ENCODE measurements at regions of chr9 and their contacts with region 1.

Region 1: GRCh38 chr9:75855509-75855908 is 35.0 kb upstream of the PCSK5 start:
- DNase-seq: no peak
- ATAC-seq: peak; percentile 59

Region 2: DNA sequence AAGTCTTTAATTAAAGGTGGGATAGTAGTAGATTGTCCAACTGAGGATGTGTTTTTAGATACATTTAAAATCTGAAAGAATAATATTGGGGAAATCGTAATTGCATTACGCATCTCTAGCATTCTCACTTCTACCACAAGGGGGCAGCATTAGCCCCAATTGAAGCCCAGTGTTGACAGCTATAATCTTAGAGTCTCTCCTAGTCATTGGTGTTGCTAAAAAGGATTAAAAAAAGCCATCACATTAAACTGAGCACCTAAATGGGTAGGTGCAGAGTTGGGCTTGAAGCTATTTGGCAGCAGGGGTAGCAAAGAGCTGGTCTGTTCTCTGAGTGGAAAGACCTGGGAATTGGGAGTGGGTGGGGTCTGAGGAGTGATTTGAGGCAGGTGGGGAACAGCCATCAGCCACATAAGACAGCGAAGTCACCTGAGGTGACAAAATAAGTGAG is 590.0 kb before region 1 on chr9:
- intact Hi-C with region 1: loop called (anchors 5 kb)
- DNase-seq: no peak
- ATAC-seq: peak; percentile 72

Region 3: DNA sequence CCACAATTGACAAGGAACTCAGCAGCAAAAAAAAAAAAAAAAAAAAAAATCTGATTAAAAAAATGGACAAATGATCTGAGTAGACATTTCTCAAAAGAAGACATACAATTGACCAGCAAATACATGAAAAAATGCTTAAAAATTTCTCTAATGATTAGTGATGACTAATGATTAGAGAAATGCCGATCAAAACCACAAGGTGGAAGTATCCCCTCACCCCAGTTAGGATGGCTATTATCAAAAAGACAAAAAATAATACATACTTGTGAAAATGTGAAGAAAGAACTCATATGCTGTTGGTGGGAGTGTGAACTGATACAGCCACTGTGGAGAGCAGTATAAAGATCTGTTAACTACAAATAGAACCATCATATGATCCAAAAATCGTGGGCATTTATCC is 521.9 kb before region 1 on chr9:
- intact Hi-C with region 1: loop called (anchors 10 kb)
- DNase-seq: no peak
- ATAC-seq: peak; percentile 36

Region 4: DNA sequence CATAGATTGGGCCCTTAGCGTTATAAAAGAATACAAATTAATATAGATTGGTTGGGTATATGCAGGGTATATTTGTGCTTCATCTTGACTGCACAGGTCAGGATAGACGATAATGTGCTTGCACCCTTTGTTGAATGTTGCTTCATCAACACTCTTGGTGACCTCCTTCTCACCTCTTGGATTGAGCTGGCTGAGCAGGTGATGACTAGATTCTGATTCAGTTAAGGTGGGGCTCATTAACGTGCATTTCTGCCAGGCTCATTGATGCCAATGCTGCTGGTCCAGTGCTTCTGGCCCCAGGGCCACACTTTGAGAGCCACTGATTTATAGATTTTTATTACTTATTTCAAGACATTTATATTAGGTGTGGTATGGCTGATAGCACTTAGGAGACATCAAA is 62.6 kb after region 1 on chr9:
- intact Hi-C with region 1: no loop called
- DNase-seq: no peak
- ATAC-seq: no peak